ENCODE measurements at regions of chr2 and their contacts with region 1.

Region 1: DNA sequence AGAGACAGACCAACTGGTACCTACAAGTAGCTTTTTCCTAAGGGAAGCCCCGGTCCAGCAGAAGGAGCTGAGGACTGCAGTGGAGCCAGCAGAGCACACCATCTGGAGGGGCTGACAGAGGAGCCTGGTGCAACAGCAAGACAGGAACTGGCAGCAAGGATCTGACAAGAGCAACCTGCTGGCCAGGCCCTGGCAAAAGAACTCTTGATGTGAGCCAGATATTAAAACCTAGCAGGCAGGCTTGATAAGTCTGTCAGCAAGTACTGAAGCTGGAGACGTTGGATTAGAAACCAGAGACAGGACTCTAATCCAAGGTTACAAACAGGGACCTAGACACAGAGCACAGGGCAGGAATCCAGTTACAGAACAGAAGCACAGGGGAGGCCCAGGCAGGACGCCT is 260.7 kb upstream of the MGAT5 start:
- DNase-seq: no peak
- ATAC-seq: peak; percentile 85

Region 2: GRCh38 chr2:133812826-133813617 is 180.1 kb before region 1 on chr2:
- intact Hi-C with region 1: no loop called
- DNase-seq: no peak
- ATAC-seq: no peak

Region 3: GRCh38 chr2:133948610-133949290 is 44.4 kb before region 1 on chr2:
- intact Hi-C with region 1: loop called (anchors 2 kb)
- DNase-seq: no peak
- ATAC-seq: peak; percentile 95

Region 4: DNA sequence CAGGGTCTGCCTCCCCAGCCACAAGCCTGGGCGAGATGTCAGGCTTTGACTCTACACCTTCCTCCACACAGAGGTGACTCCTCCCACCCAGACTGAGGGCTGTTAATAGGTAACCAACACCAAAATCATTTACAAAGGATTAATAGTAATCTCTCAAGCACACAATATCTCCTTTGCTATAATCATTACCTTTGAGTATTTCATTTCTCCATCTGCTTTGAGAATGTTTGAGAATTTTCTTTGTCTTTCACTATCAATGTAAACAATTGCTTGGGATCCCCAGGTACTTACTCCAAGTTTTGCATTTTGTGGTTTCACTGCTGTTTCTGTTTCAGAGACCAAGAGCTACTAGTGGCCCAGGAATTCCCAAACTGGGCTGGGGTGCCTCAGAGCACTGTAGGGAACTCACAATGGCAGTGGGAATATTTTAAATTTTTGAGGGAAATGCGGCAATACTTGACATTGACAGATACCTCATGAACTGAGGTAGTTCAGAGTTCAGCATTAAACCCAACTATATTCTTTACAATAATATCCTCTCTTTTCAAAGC is 94.3 kb after region 1 on chr2:
- intact Hi-C with region 1: loop called (anchors 10 kb)
- DNase-seq: no peak
- ATAC-seq: peak; percentile 23

Region 5: GRCh38 chr2:134178241-134178877 is 185.2 kb after region 1 on chr2:
- intact Hi-C with region 1: no loop called
- DNase-seq: no peak
- ATAC-seq: no peak

Region 6: DNA sequence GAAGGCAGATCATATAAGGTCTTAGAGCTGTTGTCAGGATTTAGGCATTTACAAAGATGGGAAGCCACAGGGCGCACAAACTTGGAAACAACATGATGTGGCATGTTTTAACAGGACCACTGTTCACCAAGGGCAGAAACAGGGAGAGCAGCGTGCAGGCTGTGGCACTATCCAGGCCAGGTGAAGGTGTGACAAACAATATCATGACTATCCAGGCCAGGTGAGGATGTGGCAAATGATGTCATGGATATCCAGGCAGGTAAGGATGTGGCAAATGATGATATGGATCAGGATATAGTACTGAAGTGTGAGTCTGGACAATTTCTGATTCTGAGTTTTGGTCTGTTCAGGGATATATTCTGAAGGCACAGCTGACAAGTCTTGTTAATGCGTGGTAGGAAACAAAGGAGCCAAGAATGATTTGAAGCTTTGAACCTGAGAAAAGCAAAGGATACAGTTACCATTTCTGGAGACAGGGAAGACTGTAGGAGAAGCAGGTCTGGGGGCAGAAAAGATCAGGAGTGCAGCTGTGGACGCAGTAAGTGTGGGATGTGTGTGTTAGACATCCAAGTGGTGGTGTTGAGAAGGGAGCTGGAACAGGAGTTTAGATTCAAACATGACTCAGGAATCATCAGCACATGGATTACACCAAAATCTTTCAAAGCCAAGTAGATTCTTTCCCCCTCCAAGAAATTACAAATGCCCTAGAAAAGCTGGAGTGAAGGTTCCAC is 519.7 kb after region 1 on chr2:
- intact Hi-C with region 1: no loop called
- DNase-seq: no peak
- ATAC-seq: no peak

Measured in Right ventricle myocardium inferior (tissue), 1 donor.